Vagina (tissue), 2 donors: ENCODE measurements at regions of chr17 and their contacts with region 1.

Region 1: GRCh38 chr17:45148183-45149036 is at the start of gene HEXIM1:
- DNase-seq: peak; percentile 97 to 100
- H3K4me3 ChIP-seq: peak within 1 kb of the TSS; percentile 68 to 78
- H3K27ac ChIP-seq: peak within 1 kb of the TSS; percentile 99
- H3K4me1 ChIP-seq: peaks cover 59% of the 10 kb centered on the region
- H3K27me3 ChIP-seq: no peaks in the 10 kb centered on the region
- CTCF ChIP-seq: no peak
- POLR2A ChIP-seq: peak in 1 of 2 donors; percentile 99
- total RNA-seq, gene HEXIM1: 27.5 TPM

Region 2: DNA sequence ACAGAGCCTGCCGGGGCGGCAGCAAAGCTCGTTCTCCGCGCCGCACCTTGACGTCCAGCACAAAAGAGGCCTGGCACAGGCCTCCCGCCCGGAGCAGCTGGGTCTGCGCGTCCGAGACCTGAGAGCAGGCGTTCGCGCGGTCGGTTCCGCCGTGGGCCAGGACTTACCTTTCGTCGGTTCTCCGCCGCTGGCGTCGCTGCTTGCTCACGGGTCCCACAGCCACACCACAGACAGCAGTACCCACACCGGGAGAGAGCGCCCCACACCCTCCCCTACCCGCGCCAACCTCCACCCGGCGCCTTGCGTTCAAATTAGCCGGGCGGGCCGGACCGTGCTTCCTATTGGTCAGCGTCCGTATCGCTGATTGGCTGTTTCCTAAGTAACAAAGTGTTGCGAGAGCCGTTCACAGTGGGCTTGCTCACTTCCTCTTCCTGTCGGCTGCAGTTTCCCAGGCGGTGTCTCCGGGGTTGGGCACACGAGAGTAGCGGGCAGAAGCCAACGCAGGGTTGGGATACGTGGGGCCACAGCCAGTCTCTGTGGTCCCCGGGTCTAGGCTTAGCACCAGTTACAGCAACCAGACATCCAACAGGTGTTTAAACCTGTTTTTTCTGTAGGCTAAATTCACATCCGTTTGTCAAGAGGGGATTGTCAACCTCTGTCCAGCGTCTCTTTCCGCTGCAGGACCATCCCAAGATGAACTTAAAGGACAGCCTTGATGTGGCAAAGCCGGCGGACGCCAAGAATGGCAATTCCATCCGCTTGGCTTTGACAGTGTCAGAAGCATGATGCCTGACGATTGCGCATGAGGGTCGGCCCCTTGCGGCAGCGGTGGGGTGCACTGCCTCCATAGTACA is 200.7 kb before region 1 on chr17 and contains the start of gene KIF18B:
- intact Hi-C with region 1: no loop called
- DNase-seq: peak in 1 of 2 donors; percentile 93
- H3K4me3 ChIP-seq: peak within 1 kb of the TSS; percentile 54 to 79
- H3K27ac ChIP-seq: peak within 1 kb of the TSS; percentile 52
- H3K4me1 ChIP-seq: peaks cover 9% of the 10 kb centered on the region
- H3K27me3 ChIP-seq: no peaks in the 10 kb centered on the region
- CTCF ChIP-seq: peak in 1 of 3 experiments; percentile 25
- POLR2A ChIP-seq: peak in 1 of 2 donors; percentile 52
- total RNA-seq, gene KIF18B: 0.74 TPM

Region 3: DNA sequence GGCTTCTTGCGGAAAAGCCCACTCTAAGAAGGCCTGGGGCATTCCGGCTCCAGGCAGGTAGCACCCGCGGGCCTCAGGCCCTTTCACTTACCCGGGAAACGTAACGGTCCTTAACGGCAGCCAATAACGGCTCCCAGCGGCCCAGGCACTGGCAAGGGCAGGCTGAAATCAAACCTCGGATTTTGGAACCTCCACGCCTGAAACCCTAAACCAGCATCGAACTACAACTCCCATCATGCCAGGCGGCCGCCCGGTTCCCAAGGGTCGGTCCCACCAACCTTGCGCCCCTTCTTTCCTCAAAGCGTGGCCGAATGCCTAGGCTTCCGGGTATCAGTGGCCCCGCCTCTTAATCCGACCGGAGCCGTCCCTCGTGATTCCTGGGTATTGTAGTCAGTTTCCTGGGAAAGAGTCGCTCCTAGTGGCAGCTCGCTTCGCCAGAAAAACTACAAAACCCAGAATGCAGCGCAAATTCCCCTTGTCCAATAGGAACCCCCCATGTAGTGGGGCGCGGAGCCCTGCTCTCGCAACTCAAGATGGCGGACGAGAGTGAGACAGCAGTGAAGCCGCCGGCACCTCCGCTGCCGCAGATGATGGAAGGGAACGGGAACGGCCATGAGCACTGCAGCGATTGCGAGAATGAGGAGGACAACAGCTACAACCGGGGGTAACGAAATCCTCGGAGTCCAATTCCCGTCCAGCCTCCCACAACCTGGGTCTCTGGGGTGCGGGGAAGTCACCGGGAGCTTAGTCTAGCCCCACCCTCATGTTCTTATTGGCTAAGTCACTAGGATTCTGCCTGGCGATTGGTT is 87.4 kb before region 1 on chr17 and contains the start of gene NMT1:
- intact Hi-C with region 1: no loop called
- DNase-seq: peak; percentile 99 to 100
- H3K4me3 ChIP-seq: peak within 1 kb of the TSS; percentile 80 to 81
- H3K27ac ChIP-seq: peak within 1 kb of the TSS; percentile 93
- H3K4me1 ChIP-seq: peaks cover 57% of the 10 kb centered on the region
- H3K27me3 ChIP-seq: no peaks in the 10 kb centered on the region
- CTCF ChIP-seq: no peak
- POLR2A ChIP-seq: peak in 1 of 2 donors; percentile 90
- total RNA-seq, gene NMT1: 49.4 TPM

Region 4: DNA sequence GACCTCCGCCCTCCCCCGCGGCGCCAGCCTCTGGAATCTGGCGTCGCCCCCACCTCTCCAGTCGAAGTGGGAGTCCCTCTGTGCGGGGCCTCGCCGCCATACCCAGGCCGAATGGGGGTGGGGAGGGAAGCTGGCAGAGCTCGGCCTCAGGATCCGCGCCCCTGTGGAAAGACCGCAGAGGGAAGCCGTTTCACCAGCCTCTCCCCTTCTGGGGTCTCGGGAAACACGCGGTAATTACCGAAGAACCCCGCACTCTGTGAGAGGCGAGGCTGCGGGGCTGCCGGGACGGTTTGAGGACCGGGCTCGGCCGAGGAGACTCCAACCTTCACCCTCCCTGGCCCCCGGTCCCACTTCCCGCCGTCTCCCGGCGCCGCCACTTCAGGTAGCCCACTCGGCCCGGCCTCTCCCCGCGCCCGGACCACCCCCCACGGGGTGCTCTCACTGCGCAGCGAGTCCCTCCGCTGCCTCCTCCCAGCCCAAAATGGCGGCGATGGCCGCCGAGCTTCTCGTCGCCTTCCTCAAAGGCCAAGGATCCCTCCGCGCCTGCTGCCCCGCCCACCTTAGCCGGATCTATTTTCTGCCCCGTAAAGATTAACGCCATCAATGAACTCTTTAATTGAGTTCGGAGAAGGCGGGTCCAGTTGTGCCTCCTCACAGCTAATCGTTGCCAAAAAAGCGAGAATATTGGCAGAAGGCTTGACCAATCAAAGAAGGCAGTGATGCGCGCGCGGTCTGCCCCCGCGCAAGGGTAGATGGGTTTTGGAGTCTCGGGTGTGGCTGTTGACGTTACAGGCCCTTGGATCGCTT is 12.8 kb after region 1 on chr17:
- intact Hi-C with region 1: loop called (anchors 1 kb)
- DNase-seq: peak; percentile 100
- H3K4me3 ChIP-seq: peak overlapping the region; percentile 97 to 100
- H3K27ac ChIP-seq: peak overlapping the region; percentile 100
- H3K4me1 ChIP-seq: peaks cover 55% of the 10 kb centered on the region
- H3K27me3 ChIP-seq: no peaks in the 10 kb centered on the region
- CTCF ChIP-seq: no peak
- POLR2A ChIP-seq: peak in 1 of 2 donors; percentile 99

Region 5: GRCh38 chr17:45341533-45342158 is 193.2 kb after region 1 on chr17:
- intact Hi-C with region 1: no loop called
- DNase-seq: peak; percentile 74 to 89
- H3K4me3 ChIP-seq: no peak overlapping the region
- H3K27ac ChIP-seq: peak overlapping the region; percentile 20
- H3K4me1 ChIP-seq: peaks cover 46% of the 10 kb centered on the region
- H3K27me3 ChIP-seq: no peaks in the 10 kb centered on the region
- CTCF ChIP-seq: no peak
- POLR2A ChIP-seq: no peak